ENCODE measurements at regions of chr2 and their contacts with region 1.

Region 1: DNA sequence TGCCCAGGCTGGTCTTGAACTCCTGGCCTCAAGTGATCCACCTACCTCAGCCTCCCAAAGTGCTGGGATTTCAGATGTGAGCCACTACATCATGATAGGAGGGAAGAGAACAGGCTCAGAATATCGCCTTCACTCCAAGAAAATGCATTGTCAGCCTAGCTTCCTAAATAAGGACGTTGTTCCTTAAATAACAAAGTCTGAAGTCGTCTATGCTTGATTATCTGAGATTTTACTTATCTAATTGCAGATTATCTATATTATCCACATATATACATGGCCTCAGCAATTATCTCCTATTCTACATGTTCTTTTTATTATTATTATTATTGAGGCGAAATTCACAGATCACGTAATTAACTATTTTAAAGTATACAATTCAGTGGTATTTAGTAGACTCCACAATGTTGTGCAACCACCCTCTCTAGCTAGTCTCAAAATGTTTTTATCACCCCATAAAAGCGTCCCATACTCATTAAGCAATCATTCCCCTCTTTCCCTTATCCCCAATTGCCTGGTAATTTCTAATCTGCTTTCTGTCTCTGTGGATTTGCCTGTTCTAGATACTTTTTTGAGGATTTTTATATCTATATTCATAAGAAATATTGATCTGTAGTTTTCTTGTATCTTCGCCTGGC is 95.1 kb upstream of the RFX8 start:
- DNase-seq: no peak
- H3K4me3 ChIP-seq: no peak overlapping the region
- H3K4me3 Mint-ChIP-seq: peak overlapping the region in 6 of 8 donors; percentile 73 to 92 (median 82)
- H3K27ac ChIP-seq: peak overlapping the region; percentile 29
- H3K27ac Mint-ChIP-seq: peak overlapping the region in 6 of 7 donors; percentile 82 to 96 (median 92)
- H3K4me1 ChIP-seq: peaks cover 19% of the 10 kb centered on the region
- H3K4me1 Mint-ChIP-seq: peaks cover 18 to 62% (median 44%) of the 10 kb centered on the region in 4 donors
- H3K27me3 ChIP-seq: no peaks in the 10 kb centered on the region
- H3K27me3 Mint-ChIP-seq: no peaks in the 10 kb centered on the region

Region 2: DNA sequence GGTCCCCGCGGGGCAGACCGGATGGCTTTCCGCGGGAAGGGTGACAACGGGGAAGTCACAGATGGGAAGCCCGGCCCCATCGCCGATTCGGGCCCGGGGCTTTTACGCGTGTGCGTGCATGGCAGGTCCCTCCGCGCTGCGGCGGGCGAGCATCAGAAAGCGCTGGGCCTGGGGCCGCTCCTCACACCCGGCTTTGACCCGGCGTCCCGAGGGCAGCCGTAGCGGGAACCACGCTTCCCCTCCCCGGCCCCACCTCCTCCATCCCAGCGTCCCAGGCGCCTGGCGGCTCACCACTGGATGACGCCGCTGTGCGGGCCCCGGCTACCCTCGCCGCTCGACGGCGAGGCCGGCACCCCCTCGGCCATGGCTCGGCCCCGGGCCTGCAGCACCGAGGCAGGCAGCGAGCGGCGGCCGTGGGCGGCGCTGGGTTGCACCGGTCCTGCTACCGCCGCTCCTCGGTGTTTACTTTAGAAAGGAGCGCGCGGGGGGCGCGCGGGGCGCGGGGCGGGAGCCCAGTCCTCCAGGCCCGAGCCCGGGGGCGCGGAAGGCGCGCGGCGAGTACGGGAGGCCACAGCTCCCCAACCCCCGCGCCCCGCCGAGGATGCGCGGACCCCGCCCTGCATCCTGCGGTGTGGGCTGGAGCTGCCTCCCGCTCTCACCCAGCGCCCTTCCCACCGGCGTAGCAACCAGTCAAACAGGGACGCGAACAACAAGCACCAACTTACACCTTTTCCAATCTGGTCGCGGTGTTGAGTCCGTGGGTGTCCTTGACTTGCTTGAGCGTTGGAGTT is 95.9 kb before region 1 on chr2:
- CTCF ChIA-PET with region 1: no interaction called
- POLR2A ChIA-PET with region 1: interaction called, 3 read pairs
- intact Hi-C with region 1: loop called (anchors 1 kb)
- DNase-seq: peak in 4 of 5 donors; percentile 23 to 39 (median 36)
- H3K4me3 ChIP-seq: peak overlapping the region; percentile 26 to 63
- H3K4me3 Mint-ChIP-seq: peak overlapping the region; percentile 82 to 94 (median 89)
- H3K27ac ChIP-seq: no peak overlapping the region
- H3K27ac Mint-ChIP-seq: peak overlapping the region in 4 of 7 donors; percentile 35 to 84 (median 62)
- H3K4me1 ChIP-seq: peaks cover 17% of the 10 kb centered on the region
- H3K4me1 Mint-ChIP-seq: peaks cover 5 to 12% (median 7%) of the 10 kb centered on the region in 4 donors
- H3K27me3 ChIP-seq: no peaks in the 10 kb centered on the region
- H3K27me3 Mint-ChIP-seq: no peaks in the 10 kb centered on the region

Region 3: GRCh38 chr2:101492936-101493473 is 77.0 kb before region 1 on chr2:
- CTCF ChIA-PET with region 1: no interaction called
- POLR2A ChIA-PET with region 1: no interaction called
- intact Hi-C with region 1: no loop called
- DNase-seq: no peak
- H3K4me3 ChIP-seq: no peak overlapping the region
- H3K4me3 Mint-ChIP-seq: no peak overlapping the region
- H3K27ac ChIP-seq: no peak overlapping the region
- H3K27ac Mint-ChIP-seq: peak overlapping the region in 1 of 7 donors; percentile 23
- H3K4me1 ChIP-seq: no peaks in the 10 kb centered on the region
- H3K4me1 Mint-ChIP-seq: peaks cover 0 to 4% (median 2%) of the 10 kb centered on the region in 4 donors
- H3K27me3 ChIP-seq: no peaks in the 10 kb centered on the region
- H3K27me3 Mint-ChIP-seq: no peaks in the 10 kb centered on the region

Region 4: GRCh38 chr2:101653469-101653868 is 83.5 kb after region 1 on chr2:
- CTCF ChIA-PET with region 1: no interaction called
- POLR2A ChIA-PET with region 1: no interaction called
- intact Hi-C with region 1: loop called (anchors 5 kb)
- DNase-seq: no peak
- H3K4me3 ChIP-seq: no peak overlapping the region
- H3K4me3 Mint-ChIP-seq: no peak overlapping the region
- H3K27ac ChIP-seq: no peak overlapping the region
- H3K27ac Mint-ChIP-seq: peak overlapping the region in 4 of 7 donors; percentile 1 to 59 (median 28)
- H3K4me1 ChIP-seq: peaks cover 23% of the 10 kb centered on the region
- H3K4me1 Mint-ChIP-seq: peaks cover 14 to 32% (median 20%) of the 10 kb centered on the region in 4 donors
- H3K27me3 ChIP-seq: no peaks in the 10 kb centered on the region
- H3K27me3 Mint-ChIP-seq: no peaks in the 10 kb centered on the region

Region 5: DNA sequence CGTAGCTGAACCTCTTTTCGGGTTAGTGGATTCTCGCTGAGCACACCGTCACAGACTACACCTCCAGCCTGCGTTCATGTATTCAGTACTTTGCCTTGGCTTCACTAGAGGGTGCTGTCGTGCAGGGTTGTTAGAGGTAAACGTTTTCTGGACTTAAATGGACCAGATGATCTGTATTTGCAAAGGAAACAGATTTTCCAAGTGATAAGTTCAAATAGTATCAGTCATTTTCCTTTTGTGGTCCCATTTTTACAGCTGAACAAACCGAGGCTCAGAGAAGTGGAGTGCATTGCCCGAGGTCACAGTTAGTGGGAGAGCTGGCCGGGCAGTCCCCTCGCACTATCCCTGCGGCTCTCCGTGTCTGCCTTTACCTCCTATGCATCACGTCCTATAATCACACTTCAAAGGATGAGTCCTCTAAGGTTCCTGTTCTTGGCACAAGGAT is 253.4 kb after region 1 on chr2:
- CTCF ChIA-PET with region 1: interaction called, 4 read pairs
- POLR2A ChIA-PET with region 1: no interaction called
- intact Hi-C with region 1: loop called (anchors 2 kb)
- DNase-seq: peak; percentile 62 to 82 (median 67)
- H3K4me3 ChIP-seq: no peak overlapping the region
- H3K4me3 Mint-ChIP-seq: peak overlapping the region in 7 of 8 donors; percentile 13 to 69 (median 48)
- H3K27ac ChIP-seq: no peak overlapping the region
- H3K27ac Mint-ChIP-seq: peak overlapping the region; percentile 66 to 90 (median 83)
- H3K4me1 ChIP-seq: peaks cover 67% of the 10 kb centered on the region
- H3K4me1 Mint-ChIP-seq: peaks cover 45 to 87% (median 66%) of the 10 kb centered on the region in 4 donors
- H3K27me3 ChIP-seq: no peaks in the 10 kb centered on the region
- H3K27me3 Mint-ChIP-seq: no peaks in the 10 kb centered on the region